ENCODE measurements at regions of chr7 and their contacts with region 1.

Region 1: DNA sequence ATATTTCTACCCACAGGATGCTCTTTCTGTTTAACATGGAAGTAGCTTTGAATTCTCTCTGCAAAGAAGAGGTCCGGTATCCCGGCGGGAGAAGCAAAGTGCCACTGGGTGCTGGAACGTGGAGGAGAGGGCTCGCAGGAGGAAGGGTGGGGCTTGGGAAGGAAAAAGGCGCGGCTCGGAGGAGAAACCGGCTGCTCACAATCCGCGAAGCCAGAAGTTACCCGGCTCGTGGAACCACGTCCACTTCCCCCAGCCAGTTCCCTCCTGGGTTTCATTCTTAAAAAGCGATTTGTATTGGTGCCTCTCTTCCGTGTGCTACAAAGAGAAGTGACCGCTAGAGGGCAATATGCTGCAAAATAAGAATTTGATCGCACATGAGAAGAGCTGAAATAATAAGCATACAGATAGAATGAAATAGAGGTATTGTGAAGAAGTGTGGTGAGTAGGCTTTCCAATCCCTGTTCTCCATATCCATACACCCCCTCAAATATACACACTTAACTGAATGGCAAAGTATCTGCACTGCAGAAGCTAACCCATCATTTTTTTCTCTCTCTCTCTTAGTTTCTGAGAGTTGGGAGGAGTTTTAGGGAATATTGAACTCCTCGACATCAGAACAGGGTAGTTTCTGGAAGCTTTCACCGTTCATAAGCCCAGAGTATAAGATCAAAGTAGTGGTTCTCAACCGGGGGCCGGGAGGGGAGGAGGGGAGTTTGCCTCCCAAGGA is 31.1 kb downstream of the TRIL start:
- DNase-seq: peak in 9 of 10 donors; percentile 13 to 86 (median 49)

Region 2: GRCh38 chr7:28879105-28879504 is 47.9 kb before region 1 on chr7:
- intact Hi-C with region 1: no loop called
- DNase-seq: no peak

Region 3: DNA sequence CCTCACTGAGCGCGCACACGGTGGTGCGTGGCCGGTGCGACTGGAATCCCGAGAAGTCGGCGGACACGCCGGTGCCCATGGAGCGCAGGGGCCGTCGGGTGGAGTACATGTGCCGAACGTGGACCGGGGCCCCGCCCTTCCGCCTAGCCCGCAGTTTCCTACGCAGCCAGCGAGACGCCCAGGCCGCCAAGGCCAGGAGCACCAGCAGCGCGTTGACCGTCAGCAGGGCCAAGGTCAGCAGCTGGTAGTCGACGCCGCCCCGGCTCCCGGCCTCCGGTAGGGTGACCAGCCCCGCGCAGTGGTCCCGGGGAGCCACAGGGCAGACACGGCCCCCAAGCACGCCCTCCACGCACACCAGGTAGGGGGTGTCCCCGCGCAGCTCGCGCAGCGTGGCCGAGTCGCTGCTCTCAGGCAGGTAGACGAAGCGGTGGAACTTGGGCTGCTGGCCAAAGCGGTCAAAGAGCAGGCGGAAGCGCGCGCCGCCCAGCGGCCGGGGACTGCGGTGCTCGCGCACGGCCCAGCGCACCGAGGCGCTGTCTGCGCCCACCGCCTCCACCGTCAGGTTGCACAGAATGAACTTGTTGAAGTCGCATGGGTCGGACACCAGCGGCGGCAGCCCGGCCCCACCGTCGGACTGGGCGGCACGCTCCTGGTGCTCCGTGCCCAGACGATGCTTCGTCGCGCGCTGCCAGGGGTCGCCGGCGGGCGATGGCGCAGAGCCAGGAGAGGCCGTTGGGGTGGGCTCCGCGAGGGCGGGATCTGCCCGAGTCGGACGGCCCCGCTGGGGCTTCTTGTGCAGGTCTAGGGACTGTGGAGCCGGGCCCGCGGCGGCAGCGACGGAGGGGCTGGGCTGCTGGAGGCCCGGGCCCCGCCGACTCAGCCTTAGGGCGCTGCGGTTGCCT is 28.9 kb after region 1 on chr7:
- intact Hi-C with region 1: loop called (anchors 2 kb)
- DNase-seq: peak in 9 of 10 donors; percentile 35 to 91 (median 48)

Region 4: DNA sequence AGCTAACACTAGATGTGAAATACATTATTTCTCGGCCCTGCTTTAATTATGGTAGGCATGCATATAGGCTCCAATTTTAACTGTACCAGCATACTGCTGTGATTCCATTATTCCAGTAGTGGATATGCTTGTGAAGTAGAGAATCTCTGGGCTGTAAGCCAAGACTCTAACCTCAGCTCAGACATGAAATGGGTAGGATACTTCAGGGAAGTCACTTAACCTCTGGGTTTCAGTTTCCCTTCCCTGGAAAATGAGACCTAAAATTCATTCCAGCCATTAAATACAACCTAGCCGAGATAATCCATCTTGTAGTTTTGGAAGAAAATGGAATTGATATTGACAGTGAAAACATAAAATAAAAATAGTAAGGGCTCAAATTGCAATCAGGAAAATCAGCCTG is 90.7 kb after region 1 on chr7:
- intact Hi-C with region 1: no loop called
- DNase-seq: no peak

Region 5: DNA sequence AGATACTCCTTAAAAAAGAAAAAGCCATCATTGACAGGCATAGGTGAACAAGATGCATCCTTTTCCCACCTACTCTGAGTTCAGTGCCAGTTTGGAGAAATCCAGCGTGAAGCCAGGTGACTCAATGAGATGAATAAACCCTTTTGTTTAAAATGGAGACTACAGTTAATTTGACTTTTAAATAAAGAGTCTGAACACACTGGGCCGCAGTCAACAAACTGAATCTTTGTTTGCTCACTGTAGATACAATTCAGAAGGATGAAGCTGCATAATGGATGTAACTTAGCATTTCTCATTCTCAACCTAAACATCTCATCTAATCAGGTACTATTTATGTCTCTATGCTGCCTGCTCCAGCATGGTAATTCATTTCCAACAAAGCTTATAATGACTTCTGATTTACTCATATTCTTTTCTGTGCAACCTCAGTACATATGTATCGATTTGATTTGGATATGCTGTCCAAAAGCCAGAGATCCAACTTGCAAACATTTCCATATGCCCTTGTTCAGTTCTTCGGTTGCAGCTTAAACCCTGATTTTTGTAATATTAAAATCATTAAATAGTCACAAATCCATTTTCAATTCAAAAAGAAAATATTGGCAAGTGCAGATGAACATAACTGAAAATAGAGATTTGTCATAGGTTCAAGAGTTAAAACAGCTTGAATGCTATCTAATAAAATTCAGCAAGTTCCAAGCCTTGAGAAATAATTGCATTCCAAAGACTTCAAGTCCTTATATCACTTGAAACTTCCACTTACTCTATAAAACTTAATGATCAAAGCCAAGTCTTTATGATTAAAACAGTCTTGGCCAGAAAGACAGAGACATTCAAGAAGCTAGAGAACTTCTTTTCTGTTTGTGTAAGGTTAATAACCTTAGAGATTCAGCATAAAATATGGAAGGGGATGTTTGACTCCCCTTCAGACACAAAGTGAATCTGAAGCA is 151.6 kb after region 1 on chr7:
- intact Hi-C with region 1: no loop called
- DNase-seq: no peak

Region 6: GRCh38 chr7:29105752-29106668 is 179.0 kb after region 1 on chr7:
- intact Hi-C with region 1: loop called (anchors 1 kb)
- DNase-seq: peak in 2 of 10 donors; percentile 22 to 26

Region 7: GRCh38 chr7:29345600-29345999 is 418.6 kb after region 1 on chr7:
- intact Hi-C with region 1: loop called (anchors 10 kb)
- DNase-seq: peak; percentile 35 to 96 (median 68)